ENCODE measurements at regions of chr3 and their contacts with region 1.

Region 1: DNA sequence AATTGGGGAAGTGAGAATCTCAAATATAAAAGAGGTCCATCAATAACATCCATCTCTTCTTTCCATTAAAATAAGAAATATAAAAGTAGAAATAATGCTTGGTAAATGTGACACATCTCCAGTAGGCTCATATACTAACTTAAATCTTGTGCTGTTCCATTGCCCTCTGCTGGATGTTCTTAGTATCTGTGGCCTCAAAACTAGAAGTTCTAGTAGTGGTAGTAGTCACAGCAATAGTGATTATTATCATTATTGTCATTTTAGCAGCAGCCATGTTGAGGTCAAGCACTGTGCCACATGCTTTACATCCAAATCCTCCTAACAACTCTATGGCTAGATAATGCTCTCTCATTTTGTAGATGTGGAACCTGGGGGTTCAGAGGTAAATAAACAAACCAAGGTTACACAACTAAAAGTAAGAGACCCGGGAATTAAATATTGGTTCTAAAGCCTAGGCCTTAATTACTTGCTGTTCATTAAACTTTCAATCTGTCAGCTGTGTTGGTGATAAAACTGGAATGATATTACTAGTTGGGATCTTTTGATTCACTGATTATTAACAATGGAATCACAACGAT is 20.2 kb upstream of the BTLA start:
- DNase-seq: peak in 22 of 42 donors; percentile 13 to 82 (median 56)

Region 2: GRCh38 chr3:112111785-112112402 is 407.6 kb before region 1 on chr3:
- intact Hi-C with region 1: loop called (anchors 10 kb)
- DNase-seq: peak in 38 of 42 donors; percentile 11 to 76 (median 48)

Region 3: GRCh38 chr3:112293368-112294321 is 225.9 kb before region 1 on chr3 and contains the start of gene SLC9C1:
- intact Hi-C with region 1: loop called (anchors 5 kb)
- DNase-seq: peak in 33 of 42 donors; percentile 16 to 84 (median 57)

Region 4: GRCh38 chr3:112327371-112327951 is 192.1 kb before region 1 on chr3:
- intact Hi-C with region 1: loop called (anchors 10 kb)
- DNase-seq: peak in 19 of 42 donors; percentile 11 to 82 (median 53)

Region 5: GRCh38 chr3:113035387-113035982 is 516.0 kb after region 1 on chr3:
- intact Hi-C with region 1: no loop called
- DNase-seq: peak in 25 of 42 donors; percentile 5 to 76 (median 44)

Measured in head of caudate nucleus (tissue), 42 donors.